Calu3 (cell line): ENCODE measurements at regions of chr3 and their contacts with region 1.

Region 1: GRCh38 chr3:152471814-152472671 is 203.3 kb downstream of the MBNL1 start:
- DNase-seq: peak; percentile 76
- H3K4me3 Mint-ChIP-seq: peak overlapping the region; percentile 53
- H3K27ac Mint-ChIP-seq: peak overlapping the region; percentile 77
- H3K4me1 Mint-ChIP-seq: peaks cover 1% of the 10 kb centered on the region
- H3K27me3 Mint-ChIP-seq: no peaks in the 10 kb centered on the region
- CTCF ChIP-seq: peak; percentile 87

Region 2: GRCh38 chr3:151227807-151228665 is 1244.0 kb before region 1 on chr3:
- CTCF ChIA-PET with region 1: no interaction called
- intact Hi-C with region 1: loop called (anchors 10 kb)
- DNase-seq: peak; percentile 85
- H3K4me3 Mint-ChIP-seq: peak overlapping the region; percentile 31
- H3K27ac Mint-ChIP-seq: peak overlapping the region; percentile 7
- H3K4me1 Mint-ChIP-seq: peaks cover 23% of the 10 kb centered on the region
- H3K27me3 Mint-ChIP-seq: no peaks in the 10 kb centered on the region
- CTCF ChIP-seq: peak; percentile 94

Region 3: DNA sequence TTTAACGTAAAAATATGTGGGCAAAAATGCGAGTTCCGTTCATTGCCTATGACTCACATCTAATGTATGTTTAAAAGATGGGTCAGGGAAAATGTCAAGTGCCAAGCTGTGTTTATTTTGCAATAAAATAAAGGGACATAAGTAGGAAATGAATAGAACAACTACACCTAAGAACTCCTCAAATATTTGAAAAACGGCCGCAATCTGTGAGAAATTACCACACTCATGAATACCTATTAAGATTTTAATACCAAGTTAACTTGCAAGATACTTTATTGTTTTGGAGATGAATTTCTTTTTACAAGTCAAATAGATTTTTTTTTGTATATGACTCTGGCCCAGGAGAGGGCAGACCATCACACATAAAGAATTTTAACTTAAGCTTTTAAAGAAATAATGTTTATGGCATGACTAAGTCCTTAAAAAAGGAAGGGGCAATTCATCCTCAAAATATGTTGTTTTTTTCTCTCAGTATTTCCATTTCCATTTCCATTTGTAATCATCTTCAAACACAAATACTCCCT is 445.9 kb before region 1 on chr3:
- CTCF ChIA-PET with region 1: interaction called, 11 read pairs
- intact Hi-C with region 1: loop called (anchors 1 kb)
- DNase-seq: peak; percentile 25
- H3K4me3 Mint-ChIP-seq: no peak overlapping the region
- H3K27ac Mint-ChIP-seq: peak overlapping the region; percentile 82
- H3K4me1 Mint-ChIP-seq: peaks cover 56% of the 10 kb centered on the region
- H3K27me3 Mint-ChIP-seq: no peaks in the 10 kb centered on the region
- CTCF ChIP-seq: no peak

Region 4: DNA sequence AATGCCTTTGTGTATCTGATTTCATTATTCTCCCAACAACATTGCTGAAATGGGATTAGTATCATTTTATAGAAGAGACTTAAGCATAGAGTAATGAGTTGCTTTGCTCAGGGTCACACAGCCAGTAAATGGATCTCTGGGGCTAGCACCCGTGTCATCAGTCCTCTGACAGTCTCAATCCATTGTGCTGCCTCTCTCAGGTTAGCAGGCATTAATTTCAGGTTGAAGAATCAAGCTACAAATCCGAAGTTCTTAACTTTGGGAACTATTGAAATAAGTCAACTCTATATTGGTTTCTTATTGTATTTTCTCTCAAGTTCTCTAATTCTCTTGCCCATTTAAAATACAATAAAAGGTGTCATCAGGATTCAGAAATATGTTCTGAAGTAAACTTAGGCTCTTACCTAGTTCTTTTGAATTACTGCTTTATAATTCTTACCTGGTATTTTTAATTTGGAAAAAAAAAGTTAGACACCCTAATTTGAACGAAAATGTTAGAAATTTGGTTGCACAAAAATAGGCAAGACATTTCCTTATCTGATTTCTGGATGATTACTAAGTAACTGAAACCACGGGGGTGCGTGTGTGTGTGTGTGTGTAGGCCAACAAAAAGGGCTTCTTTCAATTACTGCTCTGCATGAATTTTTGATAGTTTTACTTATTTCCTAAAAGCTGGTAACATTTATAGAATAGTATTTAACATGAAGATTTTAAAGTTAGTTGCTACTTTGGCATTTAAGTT is 13.5 kb before region 1 on chr3:
- CTCF ChIA-PET with region 1: no interaction called
- intact Hi-C with region 1: no loop called
- DNase-seq: no peak
- H3K4me3 Mint-ChIP-seq: no peak overlapping the region
- H3K27ac Mint-ChIP-seq: no peak overlapping the region
- H3K4me1 Mint-ChIP-seq: peaks cover 8% of the 10 kb centered on the region
- H3K27me3 Mint-ChIP-seq: no peaks in the 10 kb centered on the region
- CTCF ChIP-seq: no peak

Region 5: DNA sequence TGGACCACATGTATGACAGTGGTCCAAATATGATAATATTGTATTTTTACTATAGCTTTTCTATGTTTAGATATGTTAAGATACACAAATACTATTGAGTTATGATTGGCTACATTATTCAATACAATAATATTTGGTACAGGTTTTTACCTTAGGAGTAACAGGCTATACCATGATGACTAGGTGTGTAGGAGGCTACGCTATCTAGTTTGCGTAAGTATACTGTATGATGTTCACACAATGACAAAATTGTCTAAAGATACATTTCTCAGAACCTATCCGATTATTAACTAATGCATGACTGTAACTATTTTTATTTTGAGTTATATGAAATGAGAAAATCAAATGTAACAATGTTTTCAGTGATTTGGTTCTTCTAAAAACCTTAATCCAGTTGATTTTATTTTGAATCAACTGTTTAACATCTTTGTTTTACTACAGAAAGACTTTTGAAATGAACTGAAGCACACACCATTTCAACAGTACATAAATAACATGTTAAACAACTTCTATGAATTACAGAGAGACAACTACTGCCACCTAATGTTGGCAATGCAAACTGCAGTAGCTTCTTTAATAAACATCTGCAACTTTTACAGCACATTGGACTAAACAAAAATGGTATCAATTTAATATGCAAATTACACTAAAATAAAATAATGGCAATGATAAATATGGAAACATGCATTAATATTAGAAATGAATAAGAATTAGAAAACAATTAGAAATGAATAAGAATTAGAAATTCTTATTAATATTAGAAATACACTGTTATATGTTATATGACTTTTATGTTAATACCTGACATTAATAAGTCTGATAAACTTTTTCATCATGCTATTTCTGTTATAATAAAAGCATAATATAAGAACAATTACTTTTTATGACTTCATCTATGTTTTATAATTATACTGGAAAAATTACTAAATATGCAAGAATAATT is 52.4 kb after region 1 on chr3:
- CTCF ChIA-PET with region 1: interaction called, 12 read pairs
- intact Hi-C with region 1: loop called (anchors 1 kb)
- DNase-seq: peak; percentile 57
- H3K4me3 Mint-ChIP-seq: no peak overlapping the region
- H3K27ac Mint-ChIP-seq: no peak overlapping the region
- H3K4me1 Mint-ChIP-seq: no peaks in the 10 kb centered on the region
- H3K27me3 Mint-ChIP-seq: no peaks in the 10 kb centered on the region
- CTCF ChIP-seq: peak; percentile 83

Region 6: GRCh38 chr3:152937234-152937633 is 465.2 kb after region 1 on chr3:
- CTCF ChIA-PET with region 1: no interaction called
- intact Hi-C with region 1: loop called (anchors 2 kb)
- DNase-seq: no peak
- H3K4me3 Mint-ChIP-seq: no peak overlapping the region
- H3K27ac Mint-ChIP-seq: no peak overlapping the region
- H3K4me1 Mint-ChIP-seq: peaks cover 4% of the 10 kb centered on the region
- H3K27me3 Mint-ChIP-seq: no peaks in the 10 kb centered on the region
- CTCF ChIP-seq: no peak